Heart right ventricle (tissue), 16 donors: ENCODE measurements at regions of chr21 and their contacts with region 1.

Region 1: GRCh38 chr21:45923146-45923545 is 58.4 kb upstream of the COL6A1 start:
- DNase-seq: peak; percentile 68 to 74
- ATAC-seq: peak; percentile 88 to 93 (median 90)
- H3K4me3 ChIP-seq: no peak overlapping the region
- H3K27ac ChIP-seq: no peak overlapping the region
- H3K4me1 ChIP-seq: peaks cover 0 to 9% (median 0%) of the 10 kb centered on the region in 9 donors
- H3K27me3 ChIP-seq: peaks cover 0 to 8% (median 0%) of the 10 kb centered on the region in 7 donors
- CTCF ChIP-seq: peak; percentile 85 to 93 (median 89)

Region 2: DNA sequence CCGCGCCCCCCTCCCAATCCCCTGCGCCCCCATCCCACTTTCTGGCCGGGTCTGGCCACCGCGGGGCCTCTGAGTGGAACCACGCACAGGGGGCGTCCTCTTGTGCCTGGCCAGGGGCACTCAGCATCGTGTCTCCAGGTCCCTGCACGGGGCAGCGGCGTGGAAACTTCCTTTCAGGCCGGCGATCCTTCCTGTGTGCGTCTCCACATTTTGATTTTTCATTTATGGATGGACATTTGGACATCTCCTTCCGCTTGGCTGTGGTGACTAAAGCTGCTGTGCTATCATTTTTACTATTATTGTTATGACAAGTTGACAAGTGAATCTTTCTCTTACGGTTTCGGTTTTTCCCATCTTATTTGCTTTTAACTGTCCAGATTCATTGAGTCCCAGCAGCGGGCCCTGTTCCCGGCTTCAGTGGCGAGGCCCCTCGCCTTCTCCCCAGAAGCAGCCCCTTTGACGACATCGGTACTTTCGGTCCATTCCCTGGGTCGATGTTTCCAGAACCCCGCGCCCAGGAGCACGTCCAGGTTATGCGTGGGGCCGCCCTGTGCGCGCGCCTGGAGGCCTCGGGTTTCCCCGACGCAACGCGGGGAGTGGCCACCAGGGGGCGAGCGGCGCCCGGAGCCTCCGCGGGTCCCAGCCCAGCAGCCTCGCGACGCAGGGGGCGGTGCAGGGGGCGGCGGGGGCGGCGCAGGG is 368.5 kb before region 1 on chr21:
- intact Hi-C with region 1: loop called in 2 of 10 experiments (anchors 2 to 10 kb)
- DNase-seq: peak; percentile 73 to 90
- ATAC-seq: peak; percentile 68 to 87 (median 82)
- H3K4me3 ChIP-seq: peak overlapping the region in 9 of 10 donors; percentile 37 to 72 (median 56)
- H3K27ac ChIP-seq: peak overlapping the region in 4 of 10 donors; percentile 10 to 92 (median 60)
- H3K4me1 ChIP-seq: peaks cover 0 to 43% (median 6%) of the 10 kb centered on the region in 9 donors
- H3K27me3 ChIP-seq: peaks cover 0 to 18% (median 0%) of the 10 kb centered on the region in 7 donors
- CTCF ChIP-seq: peak; percentile 74 to 82 (median 78)

Region 3: DNA sequence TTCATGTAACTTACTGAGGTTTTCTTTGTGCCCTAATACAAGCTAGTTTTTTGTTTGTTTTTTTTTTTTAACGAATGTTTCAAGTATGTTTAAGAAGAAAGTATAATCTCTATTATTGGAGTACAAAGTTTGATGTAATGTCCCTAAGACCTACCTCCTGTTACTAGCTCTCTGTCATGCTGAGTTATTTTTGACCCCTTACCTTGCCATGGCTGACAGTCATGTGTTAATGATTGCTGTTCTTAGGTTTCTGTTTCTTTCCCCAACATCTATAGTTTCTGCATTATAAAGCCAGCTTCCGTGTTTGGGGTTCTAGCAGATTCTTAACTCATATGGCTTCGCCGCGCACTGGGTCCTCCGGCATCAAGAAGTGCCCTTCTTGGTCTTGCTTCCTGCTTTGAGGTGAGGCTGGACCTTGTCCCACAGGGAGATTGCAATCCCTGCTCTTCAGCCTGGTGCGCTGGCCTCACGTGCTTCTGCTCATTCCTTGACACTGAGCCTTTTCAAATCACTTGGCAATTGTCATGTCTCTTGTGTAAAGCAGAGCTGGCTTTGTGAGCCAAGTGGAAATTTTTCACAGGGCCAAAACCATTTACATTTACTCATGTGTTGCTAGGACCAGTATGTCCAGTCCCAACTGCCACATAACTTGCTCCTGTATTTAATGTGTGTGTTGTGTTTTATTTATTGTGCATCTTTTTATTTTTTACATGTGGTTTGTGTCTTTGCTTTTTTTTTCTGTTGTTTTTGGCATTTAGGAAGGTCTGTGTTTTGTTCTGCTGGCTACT is 76.6 kb before region 1 on chr21:
- intact Hi-C with region 1: loop called in 1 of 10 experiments (anchors 5 kb)
- DNase-seq: peak; percentile 20 to 48
- ATAC-seq: peak; percentile 50 to 92 (median 75)
- H3K4me3 ChIP-seq: no peak overlapping the region
- H3K27ac ChIP-seq: peak overlapping the region in 1 of 10 donors; percentile 22
- H3K4me1 ChIP-seq: peaks cover 0 to 18% (median 14%) of the 10 kb centered on the region in 9 donors
- H3K27me3 ChIP-seq: no peaks in the 10 kb centered on the region
- CTCF ChIP-seq: no peak

Region 4: DNA sequence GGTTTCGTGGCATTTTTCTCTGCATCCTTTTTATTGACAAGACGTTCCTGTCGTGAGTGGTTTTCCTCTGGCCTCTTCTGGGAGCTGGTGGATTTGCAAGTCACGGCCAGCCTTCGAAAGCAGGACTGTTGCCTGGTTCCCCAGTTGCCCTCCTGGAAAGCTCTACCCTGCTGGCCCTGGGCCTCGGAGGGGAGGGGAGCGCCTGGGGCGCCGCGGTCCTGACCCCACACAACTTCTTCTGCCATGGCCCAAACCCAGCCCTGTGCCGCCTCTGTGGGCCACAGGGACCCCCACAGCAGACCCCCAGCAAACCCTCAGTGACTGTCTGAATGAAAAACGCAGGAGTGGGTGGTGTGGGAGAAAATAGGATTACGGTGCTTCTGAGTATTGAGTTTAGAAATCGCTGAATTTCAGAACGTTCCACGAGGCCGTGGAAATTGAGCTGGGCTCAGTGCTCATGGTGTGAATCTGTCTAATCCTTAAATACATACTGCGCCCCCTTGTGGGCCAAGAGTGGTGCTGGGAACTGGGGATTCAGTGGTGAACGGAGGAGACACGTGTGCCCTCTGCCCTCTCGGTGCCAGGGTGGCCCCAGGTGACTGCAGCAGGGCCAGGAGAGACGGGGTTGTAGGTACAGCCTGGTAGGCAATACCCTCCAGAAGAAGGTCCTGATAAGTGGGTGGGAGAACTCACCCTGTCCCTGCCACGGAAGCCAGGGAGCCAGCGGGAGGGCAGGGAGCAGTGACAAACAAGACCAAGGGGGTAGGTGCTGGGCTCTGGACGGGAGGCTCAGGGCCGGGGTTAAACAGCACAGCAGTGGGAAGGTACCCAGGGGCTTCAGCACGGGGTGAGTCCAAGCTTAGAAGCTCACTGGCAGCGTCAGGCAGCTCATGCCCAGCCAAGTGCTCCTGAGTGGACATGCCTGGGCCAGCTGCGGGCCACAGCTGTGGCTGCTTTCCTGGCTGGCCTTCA is 42.8 kb before region 1 on chr21:
- intact Hi-C with region 1: loop called in 2 of 10 experiments (anchors 5 kb)
- DNase-seq: peak; percentile 44 to 65
- ATAC-seq: peak; percentile 62 to 86 (median 73)
- H3K4me3 ChIP-seq: no peak overlapping the region
- H3K27ac ChIP-seq: no peak overlapping the region
- H3K4me1 ChIP-seq: peaks cover 0 to 20% (median 2%) of the 10 kb centered on the region in 9 donors
- H3K27me3 ChIP-seq: peaks cover 0 to 52% (median 0%) of the 10 kb centered on the region in 7 donors
- CTCF ChIP-seq: peak; percentile 17 to 74 (median 65)

Region 5: GRCh38 chr21:45887120-45887611 is 36.0 kb before region 1 on chr21:
- intact Hi-C with region 1: loop called in 2 of 10 experiments (anchors 5 kb)
- DNase-seq: peak; percentile 25 to 64
- ATAC-seq: peak; percentile 21 to 88 (median 70)
- H3K4me3 ChIP-seq: no peak overlapping the region
- H3K27ac ChIP-seq: peak overlapping the region in 9 of 10 donors; percentile 6 to 94 (median 74)
- H3K4me1 ChIP-seq: peaks cover 10 to 38% (median 22%) of the 10 kb centered on the region in 9 donors
- H3K27me3 ChIP-seq: peaks cover 0 to 11% (median 0%) of the 10 kb centered on the region in 7 donors
- CTCF ChIP-seq: no peak

Region 6: GRCh38 chr21:45981151-45982089 is 58.3 kb after region 1 on chr21 and contains the start of gene COL6A1:
- intact Hi-C with region 1: no loop called
- DNase-seq: peak; percentile 85
- ATAC-seq: peak; percentile 72 to 85 (median 77)
- H3K4me3 ChIP-seq: peak within 1 kb of the TSS; percentile 51 to 100 (median 96)
- H3K27ac ChIP-seq: peak within 1 kb of the TSS; percentile 64 to 92 (median 90)
- H3K4me1 ChIP-seq: peaks cover 0 to 65% (median 19%) of the 10 kb centered on the region in 9 donors
- H3K27me3 ChIP-seq: peaks cover 0 to 22% (median 0%) of the 10 kb centered on the region in 7 donors
- CTCF ChIP-seq: no peak
- total RNA-seq, gene COL6A1: 71.9 to 260 (median 100) TPM

Region 7: DNA sequence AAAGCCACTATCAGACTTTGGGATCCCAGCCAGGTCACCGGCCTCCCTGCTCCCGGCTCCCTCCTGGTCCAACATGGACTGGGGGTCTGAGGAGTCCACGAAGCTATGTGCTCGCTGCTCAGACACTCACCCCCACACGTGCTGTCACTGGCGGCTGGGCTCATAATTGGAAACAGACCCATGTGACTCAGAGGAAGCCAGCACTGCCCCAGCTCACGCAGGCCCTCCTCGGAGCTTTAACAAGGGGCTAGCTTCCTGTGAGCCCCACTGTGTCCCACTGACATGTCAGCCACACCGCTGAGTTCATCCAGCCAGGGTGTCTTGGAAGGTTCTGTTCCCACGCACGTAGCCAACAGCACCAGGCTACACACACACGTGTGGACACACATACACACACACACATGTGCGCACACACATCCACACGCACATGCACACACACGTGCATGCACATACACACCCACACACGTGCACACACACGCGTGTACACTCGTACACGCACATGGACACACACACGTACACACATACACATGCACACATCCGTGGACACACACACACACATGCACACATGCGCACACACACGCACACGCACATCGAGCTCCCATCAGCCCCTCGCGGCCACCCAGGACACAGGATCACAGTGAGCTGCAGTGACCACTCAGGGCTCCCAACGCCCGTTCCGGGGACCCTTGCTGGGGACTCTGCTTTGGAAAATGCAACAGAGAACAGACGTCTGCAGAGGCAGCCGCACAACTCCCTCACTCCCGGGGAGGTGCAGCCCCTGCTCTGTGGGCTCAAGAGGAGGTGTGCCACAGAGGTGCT is 156.4 kb after region 1 on chr21:
- intact Hi-C with region 1: no loop called
- DNase-seq: peak in 1 of 2 donors; percentile 36
- ATAC-seq: peak; percentile 17 to 65 (median 58)
- H3K4me3 ChIP-seq: no peak overlapping the region
- H3K27ac ChIP-seq: peak overlapping the region in 3 of 10 donors; percentile 22 to 76 (median 28)
- H3K4me1 ChIP-seq: peaks cover 8 to 28% (median 24%) of the 10 kb centered on the region in 9 donors
- H3K27me3 ChIP-seq: peaks cover 0 to 8% (median 0%) of the 10 kb centered on the region in 7 donors
- CTCF ChIP-seq: no peak